Lower leg skin (tissue), 4 donors: ENCODE measurements at regions of chr6 and their contacts with region 1.

Region 1: DNA sequence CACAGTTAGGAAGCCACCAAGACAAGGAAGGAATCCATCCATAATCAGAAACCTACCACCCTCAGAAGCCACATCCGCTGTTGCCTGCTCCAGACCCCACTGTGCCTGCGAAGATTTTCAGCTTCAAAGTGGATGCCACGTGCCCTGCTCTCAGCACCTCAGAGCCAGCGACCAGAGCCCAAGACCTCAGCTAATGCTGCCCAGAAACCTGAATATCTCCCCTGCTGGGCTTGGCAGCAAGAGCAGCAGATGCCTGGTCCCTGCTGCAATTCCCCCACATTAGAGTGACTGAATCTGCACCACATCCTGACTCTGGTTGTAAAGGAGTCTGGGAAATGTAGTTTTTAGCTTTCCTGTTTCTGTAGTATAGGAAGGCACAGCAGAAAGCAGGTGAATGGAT is 10.7 kb upstream of the ULBP3 start:
- DNase-seq: peak in 1 of 2 donors; percentile 43
- H3K4me3 ChIP-seq: no peak overlapping the region
- CTCF ChIP-seq: no peak
- POLR2A ChIP-seq: no peak

Region 2: GRCh38 chr6:150334790-150335783 is 255.5 kb after region 1 on chr6:
- intact Hi-C with region 1: loop called (anchors 10 kb)
- DNase-seq: peak in 1 of 2 donors; percentile 46
- H3K4me3 ChIP-seq: no peak overlapping the region
- CTCF ChIP-seq: peak in 1 of 3 donors; percentile 57
- POLR2A ChIP-seq: no peak

Region 3: GRCh38 chr6:150395398-150396009 is 315.9 kb after region 1 on chr6:
- intact Hi-C with region 1: loop called (anchors 10 kb)
- DNase-seq: no peak
- H3K4me3 ChIP-seq: no peak overlapping the region
- CTCF ChIP-seq: peak in 1 of 3 donors; percentile 22
- POLR2A ChIP-seq: no peak